Gastrocnemius medialis (tissue), 4 donors: ENCODE measurements at regions of chr2 and their contacts with region 1.

Region 1: GRCh38 chr2:219521066-219521880 is 7.0 kb downstream of the ASIC4 start:
- DNase-seq: no peak
- ATAC-seq: no peak
- H3K4me3 ChIP-seq: no peak overlapping the region
- H3K27ac ChIP-seq: no peak overlapping the region
- H3K4me1 ChIP-seq: peaks cover 3 to 6% of the 10 kb centered on the region in 2 donors
- H3K27me3 ChIP-seq: peaks cover 23 to 34% (median 25%) of the 10 kb centered on the region in 3 donors
- CTCF ChIP-seq: peak in 4 of 5 experiments; percentile 8 to 43 (median 36)
- POLR2A ChIP-seq: no peak

Region 2: DNA sequence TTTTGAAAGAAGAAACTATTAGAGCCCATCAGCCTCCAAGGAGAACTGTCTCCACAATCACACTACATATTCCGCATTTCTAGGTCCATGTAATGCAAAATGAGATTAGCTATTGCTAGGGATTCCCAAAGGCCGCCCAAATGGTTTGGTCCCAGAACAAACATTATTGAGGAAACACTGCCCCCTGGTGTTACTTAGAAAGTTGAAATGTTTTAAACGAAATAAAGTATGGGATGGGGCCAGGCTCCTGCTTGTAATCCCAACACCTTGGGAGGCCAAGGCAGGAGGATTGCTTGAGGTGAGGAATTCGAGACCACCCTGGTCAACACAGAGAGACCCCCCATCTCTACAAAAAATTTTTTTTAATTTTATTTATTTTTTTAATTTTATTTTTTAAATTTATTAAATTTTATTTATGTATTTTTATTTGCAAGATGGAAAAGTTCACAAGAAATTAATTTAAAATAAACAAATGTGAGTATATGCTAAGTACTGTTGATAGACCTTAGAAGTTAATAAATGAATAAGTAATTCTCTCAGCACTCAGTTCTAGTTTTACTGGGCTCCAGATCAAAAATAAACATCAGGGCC is 366.1 kb before region 1 on chr2:
- in situ Hi-C with region 1: no loop called
- intact Hi-C with region 1: no loop called
- DNase-seq: no peak
- ATAC-seq: peak; percentile 41 to 66
- H3K4me3 ChIP-seq: no peak overlapping the region
- H3K27ac ChIP-seq: no peak overlapping the region
- H3K4me1 ChIP-seq: peaks cover 5 to 6% of the 10 kb centered on the region in 2 donors
- H3K27me3 ChIP-seq: no peaks in the 10 kb centered on the region
- CTCF ChIP-seq: peak; percentile 34 to 69 (median 60)
- POLR2A ChIP-seq: no peak

Region 3: DNA sequence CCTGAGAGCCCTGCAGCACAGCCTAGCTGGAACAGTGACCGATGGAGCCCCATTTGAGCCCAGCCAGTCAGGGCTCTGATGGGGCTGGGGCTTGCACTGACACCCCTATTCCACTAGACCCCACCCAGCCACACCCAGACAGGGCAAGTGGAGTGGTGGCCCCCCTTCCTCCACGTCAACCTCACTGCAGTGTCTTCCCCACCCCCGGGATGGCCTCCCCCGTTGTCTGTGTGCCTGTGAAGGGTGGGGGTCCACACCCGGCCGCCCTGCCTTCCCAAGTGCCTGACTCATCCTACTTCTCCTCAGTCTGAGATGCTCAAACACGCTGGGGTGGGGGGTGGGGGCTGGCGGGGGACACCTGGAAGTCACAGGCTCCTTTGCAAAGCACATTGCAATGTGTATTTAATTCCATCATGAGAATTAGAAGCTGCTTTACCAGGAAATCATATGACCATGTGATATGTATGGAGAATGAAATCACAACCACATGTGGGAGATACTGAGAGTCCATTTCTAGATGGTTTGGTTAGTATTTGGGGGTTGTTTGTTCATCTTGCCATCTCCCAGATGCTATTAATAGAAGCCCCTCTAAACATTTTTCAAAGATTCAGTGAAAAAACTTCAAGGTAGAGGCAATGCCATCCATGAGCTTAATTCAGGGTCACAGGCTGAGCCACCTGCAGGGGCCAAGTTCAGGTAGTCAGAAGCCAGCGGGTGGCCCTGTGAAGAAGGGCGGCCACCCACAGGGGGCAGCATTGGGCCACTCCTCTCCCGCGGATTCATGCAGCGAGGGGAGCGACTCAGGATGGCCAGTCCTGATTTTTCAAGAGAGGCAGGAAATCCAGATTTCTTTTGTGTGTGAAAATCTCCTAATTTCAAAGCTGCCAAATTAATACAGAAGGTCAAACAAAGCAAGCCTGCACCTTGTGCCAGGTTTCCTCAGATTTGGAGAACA is 45.3 kb before region 1 on chr2:
- in situ Hi-C with region 1: loop called in 2 of 4 experiments (anchors 10 kb)
- intact Hi-C with region 1: no loop called
- DNase-seq: peak; percentile 39 to 64
- ATAC-seq: peak; percentile 62 to 79
- H3K4me3 ChIP-seq: no peak overlapping the region
- H3K27ac ChIP-seq: peak overlapping the region in 2 of 4 donors; percentile 21 to 61
- H3K4me1 ChIP-seq: no peaks in the 10 kb centered on the region
- H3K27me3 ChIP-seq: no peaks in the 10 kb centered on the region
- CTCF ChIP-seq: peak; percentile 73 to 86 (median 77)
- POLR2A ChIP-seq: no peak